ENCODE measurements at regions of chr17 and their contacts with region 1.

Region 1: GRCh38 chr17:82848022-82848592 is 8.3 kb upstream of the ZNF750 start:
- DNase-seq: peak; percentile 16
- H3K4me3 ChIP-seq: peak overlapping the region in 2 of 3 experiments; percentile 11 to 14
- H3K27ac ChIP-seq: no peak overlapping the region
- H3K4me1 ChIP-seq: peaks cover 32% of the 10 kb centered on the region
- H3K27me3 ChIP-seq: no peaks in the 10 kb centered on the region
- CTCF ChIP-seq: no peak
- POLR2A ChIP-seq: no peak

Region 2: GRCh38 chr17:82698065-82698973 is 149.8 kb before region 1 on chr17 and contains the start of gene RAB40B:
- CTCF ChIA-PET with region 1: no interaction called
- POLR2A ChIA-PET with region 1: no interaction called
- dilution Hi-C with region 1: no loop called
- intact Hi-C with region 1: no loop called
- DNase-seq: peak; percentile 99
- H3K4me3 ChIP-seq: peak within 1 kb of the TSS; percentile 45 to 52 (median 47)
- H3K27ac ChIP-seq: no peak within 1 kb of the TSS
- H3K4me1 ChIP-seq: peaks cover 5% of the 10 kb centered on the region
- H3K27me3 ChIP-seq: peaks cover 3 to 8% of the 10 kb centered on the region in 2 experiments
- CTCF ChIP-seq: no peak
- POLR2A ChIP-seq: no peak
- total RNA-seq, gene RAB40B: 5.5 TPM in 2 replicates

Region 3: GRCh38 chr17:82781894-82782274 is 66.2 kb before region 1 on chr17:
- CTCF ChIA-PET with region 1: interaction called, 23 read pairs
- POLR2A ChIA-PET with region 1: interaction called, 3 read pairs
- dilution Hi-C with region 1: no loop called
- intact Hi-C with region 1: loop called (anchors 1 kb)
- DNase-seq: peak; percentile 75
- H3K4me3 ChIP-seq: no peak overlapping the region
- H3K27ac ChIP-seq: no peak overlapping the region
- H3K4me1 ChIP-seq: peaks cover 2% of the 10 kb centered on the region
- H3K27me3 ChIP-seq: no peaks in the 10 kb centered on the region
- CTCF ChIP-seq: peak; percentile 97 to 98
- POLR2A ChIP-seq: no peak

Region 4: DNA sequence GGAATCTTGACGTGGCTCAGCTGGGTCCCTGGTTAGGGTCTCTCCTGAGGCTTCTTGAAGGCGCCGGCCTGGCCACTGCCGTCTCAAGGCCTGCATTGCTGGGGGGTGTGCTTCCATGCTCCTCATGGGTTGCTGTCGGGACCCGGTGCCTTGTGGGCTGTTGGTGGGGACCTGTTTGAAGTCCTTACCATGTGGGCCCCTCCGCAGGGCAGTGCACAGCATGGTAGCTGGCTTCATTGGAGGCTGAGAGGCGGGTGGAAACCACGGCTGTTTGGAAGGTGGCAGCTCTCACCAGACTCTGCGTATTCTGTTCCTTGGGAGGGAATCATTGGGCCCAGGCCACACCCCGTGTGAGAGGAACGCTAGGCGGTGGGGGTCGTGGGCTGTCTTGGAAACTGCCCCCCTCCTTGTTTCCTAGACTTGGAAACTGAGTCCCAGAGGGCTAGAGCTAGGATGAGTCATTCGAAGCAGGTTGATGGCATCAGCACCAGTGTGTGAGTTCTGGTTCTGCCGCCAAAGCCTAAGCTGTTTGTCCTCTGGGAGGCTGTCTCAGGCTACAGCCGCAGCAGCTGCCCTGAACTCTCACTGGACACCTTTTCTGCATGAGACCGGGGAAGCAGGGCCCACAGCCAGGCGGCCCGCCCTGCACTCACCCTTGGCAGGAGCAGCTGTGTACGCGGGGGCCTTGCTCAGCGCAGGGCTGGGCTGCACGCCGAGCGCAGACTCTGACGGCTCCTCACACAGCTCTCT is 43.5 kb before region 1 on chr17:
- CTCF ChIA-PET with region 1: no interaction called
- POLR2A ChIA-PET with region 1: no interaction called
- dilution Hi-C with region 1: no loop called
- intact Hi-C with region 1: loop called (anchors 1 kb)
- DNase-seq: peak; percentile 9
- H3K4me3 ChIP-seq: no peak overlapping the region
- H3K27ac ChIP-seq: no peak overlapping the region
- H3K4me1 ChIP-seq: peaks cover 7% of the 10 kb centered on the region
- H3K27me3 ChIP-seq: no peaks in the 10 kb centered on the region
- CTCF ChIP-seq: no peak
- POLR2A ChIP-seq: no peak

Region 5: DNA sequence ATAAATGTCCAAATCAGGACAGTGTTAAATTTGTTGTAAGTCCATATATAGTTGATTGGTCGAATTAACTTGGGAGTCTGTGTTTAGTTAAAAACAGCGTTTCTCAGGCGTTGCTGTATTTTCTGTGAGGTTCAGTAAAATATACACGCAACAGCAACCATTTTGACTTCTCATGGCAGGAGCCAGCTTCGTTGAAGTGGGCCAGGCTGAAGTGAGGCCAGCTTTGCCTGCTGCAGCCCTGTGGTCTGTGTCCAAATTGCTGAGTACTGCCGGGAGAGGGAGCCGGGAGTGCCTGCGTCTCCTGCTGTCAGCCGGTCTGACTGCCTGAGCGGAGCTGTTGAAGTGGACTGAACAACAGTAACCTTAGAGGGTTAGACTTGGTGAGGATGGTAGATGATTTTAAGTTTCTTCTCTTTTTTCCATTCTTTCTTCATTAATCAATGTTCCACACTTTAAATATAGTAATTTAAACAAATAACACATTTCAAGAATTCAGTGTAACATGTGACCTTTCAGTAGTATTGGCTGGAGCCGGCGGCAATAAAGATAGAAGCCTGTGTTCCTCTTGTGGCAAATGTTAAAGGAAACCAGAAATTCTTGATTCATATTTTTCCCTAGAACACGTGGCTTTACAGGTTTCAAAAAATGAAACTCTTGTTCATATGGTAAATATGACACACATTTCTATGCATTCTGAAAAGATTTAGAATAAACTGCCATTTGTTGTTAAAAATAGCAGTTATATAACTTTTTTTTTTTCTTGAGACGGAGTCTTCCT is 28.7 kb after region 1 on chr17:
- CTCF ChIA-PET with region 1: interaction called, 35 read pairs
- POLR2A ChIA-PET with region 1: no interaction called
- dilution Hi-C with region 1: no loop called
- intact Hi-C with region 1: loop called (anchors 1 kb)
- DNase-seq: peak; percentile 79
- H3K4me3 ChIP-seq: no peak overlapping the region
- H3K27ac ChIP-seq: peak overlapping the region; percentile 52
- H3K4me1 ChIP-seq: peaks cover 19% of the 10 kb centered on the region
- H3K27me3 ChIP-seq: no peaks in the 10 kb centered on the region
- CTCF ChIP-seq: peak; percentile 37 to 61
- POLR2A ChIP-seq: no peak

Region 6: GRCh38 chr17:82917691-82918345 is 69.7 kb after region 1 on chr17:
- CTCF ChIA-PET with region 1: interaction called, 6 read pairs
- POLR2A ChIA-PET with region 1: no interaction called
- dilution Hi-C with region 1: no loop called
- intact Hi-C with region 1: loop called (anchors 2 kb)
- DNase-seq: peak; percentile 21
- H3K4me3 ChIP-seq: no peak overlapping the region
- H3K27ac ChIP-seq: no peak overlapping the region
- H3K4me1 ChIP-seq: no peaks in the 10 kb centered on the region
- H3K27me3 ChIP-seq: no peaks in the 10 kb centered on the region
- CTCF ChIP-seq: peak; percentile 41 to 65
- POLR2A ChIP-seq: no peak

Region 7: DNA sequence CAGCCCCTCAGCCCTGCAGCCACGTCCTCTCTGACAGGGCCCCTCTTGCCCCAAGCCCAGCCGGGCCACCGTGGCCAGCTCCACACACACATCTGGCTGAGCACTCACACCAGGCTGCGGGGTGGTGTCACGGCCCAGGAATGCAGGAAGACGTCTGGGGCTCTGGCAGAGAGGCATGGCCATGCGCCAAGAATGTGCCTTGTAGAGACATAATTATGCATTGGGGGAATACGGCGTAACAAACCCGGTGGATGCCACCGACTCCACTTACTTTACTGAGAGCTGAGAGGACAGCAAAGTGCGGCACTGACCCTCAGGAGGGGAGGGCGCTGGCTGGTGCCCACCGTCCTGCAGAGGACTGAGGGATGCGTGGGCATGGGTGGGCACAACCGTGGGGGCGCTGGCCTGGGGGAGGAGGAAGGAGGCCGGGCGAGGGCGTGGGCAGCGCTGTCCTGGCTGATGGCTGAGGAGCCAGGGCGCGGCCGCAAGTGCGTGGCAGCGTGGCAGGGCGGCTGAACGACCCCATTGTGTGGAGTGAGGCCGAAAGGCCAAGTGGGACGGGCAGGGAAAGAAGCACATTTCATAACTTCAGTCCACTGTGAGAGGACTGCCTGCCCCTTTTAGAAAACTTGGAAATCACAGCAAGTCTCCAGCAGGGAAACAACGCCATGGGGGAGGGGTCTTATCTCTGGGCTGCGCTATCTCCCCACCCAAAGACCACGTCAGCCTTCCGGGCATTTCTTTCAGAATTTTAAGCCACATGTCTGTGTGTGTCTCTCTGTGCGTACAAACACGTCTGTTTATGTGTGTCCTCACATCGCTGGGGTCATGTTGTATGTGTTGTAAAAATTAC is 261.9 kb after region 1 on chr17:
- CTCF ChIA-PET with region 1: interaction called, 3 read pairs
- POLR2A ChIA-PET with region 1: no interaction called
- dilution Hi-C with region 1: no loop called
- intact Hi-C with region 1: loop called (anchors 2 kb)
- DNase-seq: peak; percentile 88
- H3K4me3 ChIP-seq: peak overlapping the region in 2 of 3 experiments; percentile 15 to 26
- H3K27ac ChIP-seq: peak overlapping the region; percentile 94
- H3K4me1 ChIP-seq: peaks cover 21% of the 10 kb centered on the region
- H3K27me3 ChIP-seq: no peaks in the 10 kb centered on the region
- CTCF ChIP-seq: no peak
- POLR2A ChIP-seq: peak; percentile 90